Naive thymus-derived CD4-positive, alpha-beta T cell (primary cell): ENCODE measurements at regions of chr4 and their contacts with region 1.

Region 1: GRCh38 chr4:101540336-101540735 is 193.0 kb upstream of the PPP3CA start:
- DNase-seq: no peak
- ATAC-seq: no peak
- H3K4me3 ChIP-seq: no peak overlapping the region
- H3K4me3 Mint-ChIP-seq: no peak overlapping the region
- H3K27ac ChIP-seq: no peak overlapping the region
- H3K27ac Mint-ChIP-seq: no peak overlapping the region
- H3K4me1 ChIP-seq: no peaks in the 10 kb centered on the region
- H3K4me1 Mint-ChIP-seq: peaks cover 0 to 3% (median 0%) of the 10 kb centered on the region in 7 donors
- H3K27me3 ChIP-seq: no peaks in the 10 kb centered on the region
- H3K27me3 Mint-ChIP-seq: peaks cover 5 to 36% (median 20%) of the 10 kb centered on the region in 5 donors

Region 2: DNA sequence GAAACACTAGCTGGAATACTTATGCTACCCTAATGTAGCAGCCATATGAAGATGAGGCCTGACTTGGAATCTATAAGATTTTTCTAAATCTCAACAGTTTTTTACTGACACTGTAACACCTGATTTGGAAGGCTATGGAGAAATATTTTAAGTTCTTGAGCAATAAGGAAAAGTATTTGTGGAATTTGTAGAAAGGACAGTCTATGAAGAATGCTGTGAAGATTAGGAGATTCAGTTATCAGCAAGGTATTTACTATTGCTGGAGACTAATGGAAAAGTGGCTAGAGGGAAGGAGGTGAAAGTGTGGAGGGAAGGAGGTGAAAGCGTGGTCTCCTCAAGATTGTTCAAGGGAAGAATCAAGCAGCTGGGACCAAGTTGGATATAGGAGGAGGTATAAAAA is 832.5 kb before region 1 on chr4:
- CTCF ChIA-PET with region 1: no interaction called
- POLR2A ChIA-PET with region 1: no interaction called
- intact Hi-C with region 1: no loop called
- DNase-seq: no peak
- ATAC-seq: no peak
- H3K4me3 ChIP-seq: no peak overlapping the region
- H3K4me3 Mint-ChIP-seq: no peak overlapping the region
- H3K27ac ChIP-seq: no peak overlapping the region
- H3K27ac Mint-ChIP-seq: no peak overlapping the region
- H3K4me1 ChIP-seq: no peaks in the 10 kb centered on the region
- H3K4me1 Mint-ChIP-seq: no peaks in the 10 kb centered on the region
- H3K27me3 ChIP-seq: no peaks in the 10 kb centered on the region
- H3K27me3 Mint-ChIP-seq: peaks cover 0 to 4% (median 0%) of the 10 kb centered on the region in 5 donors

Region 3: DNA sequence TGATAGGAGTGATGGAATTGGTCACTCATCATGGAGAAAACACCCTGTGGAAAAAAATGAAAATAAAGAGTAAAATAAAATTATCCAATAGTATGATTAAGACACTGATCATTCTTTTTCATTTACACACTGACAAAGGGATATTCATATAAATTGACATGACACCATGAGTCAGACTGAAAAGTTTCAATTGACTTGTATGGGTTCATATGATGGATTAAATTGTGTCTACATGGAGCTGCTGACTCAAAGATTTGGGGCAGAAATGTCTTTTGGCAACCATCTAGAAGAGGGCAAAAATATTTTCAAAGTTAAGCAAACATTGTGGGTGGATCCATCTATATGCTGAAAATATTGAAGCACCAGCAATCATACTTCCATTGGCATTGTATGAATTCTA is 39.6 kb before region 1 on chr4:
- CTCF ChIA-PET with region 1: no interaction called
- POLR2A ChIA-PET with region 1: no interaction called
- intact Hi-C with region 1: loop called in 1 of 2 experiments (anchors 10 kb)
- DNase-seq: no peak
- ATAC-seq: no peak
- H3K4me3 ChIP-seq: no peak overlapping the region
- H3K4me3 Mint-ChIP-seq: no peak overlapping the region
- H3K27ac ChIP-seq: no peak overlapping the region
- H3K27ac Mint-ChIP-seq: no peak overlapping the region
- H3K4me1 ChIP-seq: no peaks in the 10 kb centered on the region
- H3K4me1 Mint-ChIP-seq: no peaks in the 10 kb centered on the region
- H3K27me3 ChIP-seq: no peaks in the 10 kb centered on the region
- H3K27me3 Mint-ChIP-seq: peaks cover 3 to 7% (median 6%) of the 10 kb centered on the region in 5 donors